Activated B cell treated with CpG ODN at 0.5 μM for 24 hours (primary cell): ENCODE measurements at regions of chr20 and their contacts with region 1.

Region 1: GRCh38 chr20:16083639-16084280 is 489.5 kb downstream of the KIF16B start:
- DNase-seq: no peak
- ATAC-seq: no peak
- H3K4me3 Mint-ChIP-seq: peak overlapping the region; percentile 20
- H3K27ac Mint-ChIP-seq: peak overlapping the region; percentile 75
- H3K4me1 Mint-ChIP-seq: peaks cover 56% of the 10 kb centered on the region
- H3K27me3 Mint-ChIP-seq: no peaks in the 10 kb centered on the region
- CTCF ChIP-seq: no peak

Region 2: GRCh38 chr20:16115911-16116552 is 32.3 kb after region 1 on chr20:
- CTCF ChIA-PET with region 1: no interaction called
- POLR2A ChIA-PET with region 1: no interaction called
- intact Hi-C with region 1: loop called (anchors 5 kb)
- DNase-seq: no peak
- ATAC-seq: no peak
- H3K4me3 Mint-ChIP-seq: no peak overlapping the region
- H3K27ac Mint-ChIP-seq: no peak overlapping the region
- H3K4me1 Mint-ChIP-seq: peaks cover 27% of the 10 kb centered on the region
- H3K27me3 Mint-ChIP-seq: no peaks in the 10 kb centered on the region
- CTCF ChIP-seq: no peak

Region 3: DNA sequence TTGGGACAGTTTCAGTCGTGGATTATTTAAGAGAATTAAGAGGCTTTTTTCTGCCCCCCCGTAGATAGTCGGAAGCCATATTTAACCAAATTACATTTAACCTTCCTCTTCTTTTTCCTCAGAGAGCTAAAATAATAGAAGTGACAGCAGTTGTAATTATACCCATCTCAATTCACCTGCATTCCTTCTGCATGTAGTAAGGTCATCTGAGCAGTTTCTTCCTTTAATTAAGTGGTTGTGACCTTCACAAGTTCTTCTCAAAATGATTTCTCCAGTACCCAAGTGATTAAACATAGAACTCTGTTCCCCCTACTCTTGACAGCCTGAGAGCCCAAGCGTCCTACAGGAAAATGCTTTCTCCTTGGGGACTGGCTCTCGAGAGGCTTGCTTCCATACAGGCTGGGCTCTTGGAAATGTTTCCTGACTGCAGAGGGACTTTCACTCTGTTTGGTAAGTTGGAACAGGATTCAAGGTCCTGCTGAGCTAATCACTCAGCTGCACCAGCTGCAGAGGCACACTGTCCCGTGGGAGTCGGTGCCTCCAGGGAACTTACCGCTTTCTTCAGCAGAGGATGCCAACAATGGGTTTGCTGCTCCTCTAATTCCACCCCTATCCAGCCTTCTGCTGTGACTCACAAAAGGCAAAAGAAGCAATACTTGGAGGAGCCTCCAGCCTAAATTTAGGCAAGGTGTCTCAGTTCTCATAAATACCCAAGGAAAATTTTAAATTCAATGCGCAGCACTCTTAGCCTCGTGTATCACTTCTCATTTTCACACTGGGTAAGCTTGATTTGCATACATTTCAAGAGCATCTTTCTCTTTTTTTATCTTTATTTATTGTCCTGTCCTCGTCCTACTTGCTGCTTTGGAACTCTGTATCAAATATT is 74.6 kb after region 1 on chr20:
- CTCF ChIA-PET with region 1: no interaction called
- POLR2A ChIA-PET with region 1: no interaction called
- intact Hi-C with region 1: loop called (anchors 5 kb)
- DNase-seq: peak; percentile 48
- ATAC-seq: peak; percentile 85
- H3K4me3 Mint-ChIP-seq: peak overlapping the region; percentile 81
- H3K27ac Mint-ChIP-seq: peak overlapping the region; percentile 96
- H3K4me1 Mint-ChIP-seq: peaks cover 66% of the 10 kb centered on the region
- H3K27me3 Mint-ChIP-seq: no peaks in the 10 kb centered on the region
- CTCF ChIP-seq: no peak

Region 4: GRCh38 chr20:16392346-16392745 is 308.6 kb after region 1 on chr20:
- CTCF ChIA-PET with region 1: no interaction called
- POLR2A ChIA-PET with region 1: no interaction called
- intact Hi-C with region 1: loop called (anchors 5 kb)
- DNase-seq: peak; percentile 26
- ATAC-seq: peak; percentile 85
- H3K4me3 Mint-ChIP-seq: peak overlapping the region; percentile 72
- H3K27ac Mint-ChIP-seq: peak overlapping the region; percentile 46
- H3K4me1 Mint-ChIP-seq: peaks cover 40% of the 10 kb centered on the region
- H3K27me3 Mint-ChIP-seq: no peaks in the 10 kb centered on the region
- CTCF ChIP-seq: no peak